ENCODE measurements at regions of chr1 and their contacts with region 1.

Region 1: GRCh38 chr1:168603501-168604110 is 27.2 kb downstream of the XCL1 start:
- DNase-seq: peak; percentile 82 to 88 (median 84)
- ATAC-seq: peak; percentile 94
- H3K4me3 ChIP-seq: no peak overlapping the region
- H3K27ac ChIP-seq: no peak overlapping the region
- H3K4me1 ChIP-seq: peaks cover 10% of the 10 kb centered on the region
- H3K27me3 ChIP-seq: no peaks in the 10 kb centered on the region
- CTCF ChIP-seq: peak; percentile 72 to 93 (median 90)
- POLR2A ChIP-seq: no peak

Region 2: DNA sequence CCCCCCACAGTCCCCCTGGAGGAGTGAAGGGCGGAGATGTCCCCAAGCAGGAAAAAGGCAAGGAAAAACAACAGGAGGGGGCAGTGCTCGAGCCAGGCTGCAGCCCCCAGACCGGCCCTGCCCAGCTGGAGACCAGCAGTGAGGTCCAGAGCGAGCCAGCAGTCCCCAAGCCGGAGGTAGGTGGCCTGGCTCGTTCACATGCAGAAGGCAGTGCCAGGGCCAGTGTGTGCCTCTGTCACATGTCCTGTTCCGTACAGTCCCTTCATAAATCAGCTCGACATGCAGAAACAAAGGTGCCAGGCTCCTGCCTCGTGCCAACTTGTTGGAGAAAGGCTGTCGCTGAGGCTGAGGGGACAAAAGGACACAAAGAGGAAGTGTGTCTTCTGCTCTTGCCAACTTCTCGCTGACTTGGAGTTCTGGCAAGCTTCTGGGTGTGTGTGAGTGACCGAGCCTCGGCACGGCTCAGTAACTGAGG is 905.9 kb before region 1 on chr1:
- intact Hi-C with region 1: no loop called
- DNase-seq: peak; percentile 58 to 82 (median 76)
- ATAC-seq: peak; percentile 88
- H3K4me3 ChIP-seq: no peak overlapping the region
- H3K27ac ChIP-seq: peak overlapping the region in 3 of 4 donors; percentile 45 to 68 (median 66)
- H3K4me1 ChIP-seq: peaks cover 11% of the 10 kb centered on the region
- H3K27me3 ChIP-seq: no peaks in the 10 kb centered on the region
- CTCF ChIP-seq: no peak
- POLR2A ChIP-seq: no peak

Region 3: DNA sequence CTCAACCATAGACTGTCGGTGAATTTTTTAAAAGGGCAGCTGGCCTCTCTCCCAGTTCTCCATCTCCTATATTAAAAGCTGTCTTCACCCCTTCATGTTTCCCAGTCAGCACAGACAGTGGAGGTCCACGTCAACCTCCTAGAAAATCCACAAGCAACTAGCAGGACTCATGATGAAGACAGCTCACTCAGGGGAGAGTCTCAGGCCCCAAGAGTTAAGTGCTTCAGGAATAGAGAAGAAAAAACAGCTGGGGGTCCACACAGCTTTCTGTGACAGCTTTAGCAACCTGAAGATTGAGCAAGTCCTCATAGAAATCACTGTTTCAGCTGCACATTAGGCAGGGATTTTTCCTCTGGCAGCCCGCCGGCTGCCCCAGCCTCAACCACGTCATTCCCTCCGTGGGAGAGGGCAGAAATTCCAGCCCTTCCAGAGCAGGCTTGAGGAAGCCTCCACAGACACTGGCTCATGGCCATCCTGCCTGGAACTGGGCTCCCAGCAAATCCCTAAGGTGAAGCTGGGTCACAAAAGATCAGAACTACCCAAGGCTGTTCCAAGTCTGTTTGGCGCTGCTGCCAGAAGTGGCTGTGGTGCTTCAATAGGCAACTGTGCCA is 482.1 kb before region 1 on chr1:
- intact Hi-C with region 1: no loop called
- DNase-seq: peak; percentile 66 to 78 (median 74)
- ATAC-seq: peak; percentile 91
- H3K4me3 ChIP-seq: no peak overlapping the region
- H3K27ac ChIP-seq: peak overlapping the region; percentile 3 to 56 (median 43)
- H3K4me1 ChIP-seq: peaks cover 19% of the 10 kb centered on the region
- H3K27me3 ChIP-seq: no peaks in the 10 kb centered on the region
- CTCF ChIP-seq: no peak
- POLR2A ChIP-seq: no peak

Region 4: GRCh38 chr1:168430321-168430720 is 173.3 kb before region 1 on chr1:
- intact Hi-C with region 1: no loop called
- DNase-seq: no peak
- ATAC-seq: peak; percentile 13
- H3K4me3 ChIP-seq: no peak overlapping the region
- H3K27ac ChIP-seq: no peak overlapping the region
- H3K4me1 ChIP-seq: no peaks in the 10 kb centered on the region
- H3K27me3 ChIP-seq: no peaks in the 10 kb centered on the region
- CTCF ChIP-seq: no peak
- POLR2A ChIP-seq: no peak

Region 5: DNA sequence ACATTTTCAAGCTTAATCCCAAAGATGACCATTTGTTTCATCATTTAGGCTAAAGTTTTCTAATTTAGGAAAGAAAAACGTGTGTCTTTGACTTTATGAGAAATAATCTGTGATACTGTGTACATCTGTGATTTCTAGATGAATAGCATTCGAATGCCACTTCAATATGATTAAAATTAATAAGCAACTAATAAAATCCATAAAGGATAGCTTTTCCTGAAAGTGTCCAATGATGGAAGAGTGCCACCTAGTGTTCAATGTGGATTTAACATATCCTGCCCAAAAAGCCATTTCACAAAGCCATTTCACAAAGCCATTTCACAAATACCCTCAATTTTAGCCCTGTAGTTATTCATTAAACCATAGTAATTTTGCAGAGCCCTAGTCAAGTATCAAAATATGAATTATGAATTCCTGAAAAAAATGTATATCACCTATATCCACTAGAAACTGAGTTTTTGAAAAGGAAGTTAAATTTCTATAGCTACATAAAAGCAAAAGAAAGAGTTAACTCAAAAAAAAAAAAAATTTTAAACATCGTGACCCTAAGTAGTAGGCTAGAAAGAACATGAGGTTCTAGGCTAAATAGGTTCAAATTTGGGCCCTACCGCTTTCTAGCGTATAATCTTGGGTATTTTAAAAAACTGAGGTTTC is 744.9 kb after region 1 on chr1:
- intact Hi-C with region 1: loop called (anchors 10 kb)
- DNase-seq: peak in 1 of 4 donors; percentile 21
- ATAC-seq: peak; percentile 33
- H3K4me3 ChIP-seq: no peak overlapping the region
- H3K27ac ChIP-seq: no peak overlapping the region
- H3K4me1 ChIP-seq: no peaks in the 10 kb centered on the region
- H3K27me3 ChIP-seq: no peaks in the 10 kb centered on the region
- CTCF ChIP-seq: peak; percentile 50 to 88 (median 80)
- POLR2A ChIP-seq: no peak

Measured in body of pancreas (tissue), 4 donors.